ENCODE measurements at regions of chr6 and their contacts with region 1.

Region 1: GRCh38 chr6:42050266-42051032 is at the start of gene TAF8:
- DNase-seq: peak; percentile 81
- ATAC-seq: peak; percentile 74
- H3K4me3 Mint-ChIP-seq: peak within 1 kb of the TSS; percentile 96
- H3K27ac Mint-ChIP-seq: peak within 1 kb of the TSS; percentile 99
- H3K4me1 Mint-ChIP-seq: peaks cover 54% of the 10 kb centered on the region
- H3K27me3 Mint-ChIP-seq: no peaks in the 10 kb centered on the region
- CTCF ChIP-seq: no peak
- total RNA-seq, gene TAF8: 47.2 and 55.7 TPM in 2 replicates

Region 2: GRCh38 chr6:41072676-41073623 is 977.5 kb before region 1 on chr6 and contains the start of gene NFYA:
- CTCF ChIA-PET with region 1: no interaction called
- POLR2A ChIA-PET with region 1: interaction called, 5 read pairs
- intact Hi-C with region 1: loop called (anchors 2 kb)
- DNase-seq: peak; percentile 100
- ATAC-seq: peak; percentile 63
- H3K4me3 Mint-ChIP-seq: peak within 1 kb of the TSS; percentile 96
- H3K27ac Mint-ChIP-seq: peak within 1 kb of the TSS; percentile 98
- H3K4me1 Mint-ChIP-seq: peaks cover 47% of the 10 kb centered on the region
- H3K27me3 Mint-ChIP-seq: no peaks in the 10 kb centered on the region
- CTCF ChIP-seq: no peak
- total RNA-seq, gene NFYA: 33.7 and 35.1 TPM in 2 replicates

Region 3: GRCh38 chr6:41683510-41684310 is 366.7 kb before region 1 on chr6:
- CTCF ChIA-PET with region 1: no interaction called
- POLR2A ChIA-PET with region 1: no interaction called
- intact Hi-C with region 1: no loop called
- DNase-seq: peak; percentile 78
- ATAC-seq: peak; percentile 82
- H3K4me3 Mint-ChIP-seq: peak overlapping the region; percentile 78
- H3K27ac Mint-ChIP-seq: peak overlapping the region; percentile 83
- H3K4me1 Mint-ChIP-seq: peaks cover 20% of the 10 kb centered on the region
- H3K27me3 Mint-ChIP-seq: no peaks in the 10 kb centered on the region
- CTCF ChIP-seq: peak; percentile 54

Region 4: GRCh38 chr6:41920921-41921711 is 129.3 kb before region 1 on chr6 and contains the starts of genes BYSL and MED20:
- CTCF ChIA-PET with region 1: interaction called, 43 read pairs
- POLR2A ChIA-PET with region 1: interaction called, 30 read pairs
- intact Hi-C with region 1: loop called (anchors 1 kb)
- DNase-seq: peak; percentile 95
- ATAC-seq: peak; percentile 91
- H3K4me3 Mint-ChIP-seq: peak within 1 kb of the TSS; percentile 98
- H3K27ac Mint-ChIP-seq: peak within 1 kb of the TSS; percentile 98
- H3K4me1 Mint-ChIP-seq: peaks cover 49% of the 10 kb centered on the region
- H3K27me3 Mint-ChIP-seq: no peaks in the 10 kb centered on the region
- CTCF ChIP-seq: peak; percentile 24
- total RNA-seq, gene BYSL: 39.5 and 43.2 TPM in 2 replicates
- total RNA-seq, gene MED20: 21.1 and 22.2 TPM in 2 replicates

Region 5: DNA sequence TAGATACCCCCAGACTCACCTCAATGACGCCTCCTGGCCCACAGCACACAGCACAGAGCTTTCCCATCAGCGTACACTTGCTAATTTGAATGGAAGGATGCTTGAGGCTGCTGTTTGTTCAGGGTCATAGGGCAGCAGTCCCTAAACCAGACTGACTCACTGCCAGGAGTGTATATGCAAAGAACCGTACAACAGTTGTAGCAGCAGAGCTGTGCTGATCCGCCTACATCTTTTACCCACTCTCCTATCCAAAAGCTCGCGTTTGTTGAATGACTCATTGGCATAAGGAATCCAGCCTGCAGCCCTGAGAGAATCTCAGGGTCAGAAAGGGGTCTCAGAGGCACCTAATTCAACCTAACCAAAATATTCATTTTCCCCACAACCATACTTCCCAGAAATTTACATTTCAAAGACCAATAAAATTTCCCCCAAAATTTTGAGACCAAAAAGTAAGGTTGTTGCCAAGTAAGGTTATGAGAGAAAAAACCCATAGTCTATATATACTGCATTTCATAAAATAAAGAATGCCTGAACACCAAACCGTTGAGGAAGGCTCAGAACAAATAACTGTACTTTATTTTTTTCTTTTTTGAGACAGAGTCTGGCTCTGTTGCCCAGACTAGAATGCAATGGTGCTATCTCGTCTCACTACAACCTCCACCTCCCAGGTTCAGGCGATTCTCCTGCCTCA is 73.5 kb before region 1 on chr6:
- CTCF ChIA-PET with region 1: no interaction called
- POLR2A ChIA-PET with region 1: interaction called, 10 read pairs
- intact Hi-C with region 1: no loop called
- DNase-seq: no peak
- ATAC-seq: peak; percentile 76
- H3K4me3 Mint-ChIP-seq: peak overlapping the region; percentile 47
- H3K27ac Mint-ChIP-seq: peak overlapping the region; percentile 85
- H3K4me1 Mint-ChIP-seq: peaks cover 72% of the 10 kb centered on the region
- H3K27me3 Mint-ChIP-seq: no peaks in the 10 kb centered on the region
- CTCF ChIP-seq: no peak

Region 6: DNA sequence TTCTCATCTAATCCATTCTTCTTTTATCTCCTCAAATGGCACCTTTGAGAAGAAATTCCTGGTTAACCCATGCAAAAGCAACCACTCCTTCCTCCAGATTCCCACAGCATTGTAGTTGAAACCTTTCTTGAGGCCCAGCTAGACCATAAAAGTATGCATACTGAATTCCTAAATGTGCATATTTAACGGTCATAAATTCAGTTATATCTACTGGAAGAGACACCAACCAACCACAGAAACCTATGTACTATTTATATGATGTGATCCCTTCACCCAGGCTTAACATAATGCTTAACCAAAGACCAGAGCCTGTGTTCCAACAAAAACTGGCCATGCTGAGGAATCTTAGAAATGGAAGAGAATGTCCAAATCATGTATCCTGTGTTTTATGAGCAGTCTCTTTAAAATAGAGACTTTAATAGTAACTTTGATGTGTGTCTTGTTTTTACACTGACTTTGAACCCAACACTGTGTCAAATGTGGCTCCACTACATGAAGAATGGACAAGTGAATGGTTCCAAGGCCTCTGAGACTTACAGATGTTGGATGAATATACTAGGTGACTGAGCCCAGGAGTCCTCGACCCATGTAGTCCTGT is 11.5 kb before region 1 on chr6:
- CTCF ChIA-PET with region 1: no interaction called
- POLR2A ChIA-PET with region 1: interaction called, 19 read pairs
- intact Hi-C with region 1: no loop called
- DNase-seq: no peak
- ATAC-seq: no peak
- H3K4me3 Mint-ChIP-seq: peak overlapping the region; percentile 70
- H3K27ac Mint-ChIP-seq: peak overlapping the region; percentile 92
- H3K4me1 Mint-ChIP-seq: peaks cover 59% of the 10 kb centered on the region
- H3K27me3 Mint-ChIP-seq: no peaks in the 10 kb centered on the region
- CTCF ChIP-seq: no peak

Region 7: DNA sequence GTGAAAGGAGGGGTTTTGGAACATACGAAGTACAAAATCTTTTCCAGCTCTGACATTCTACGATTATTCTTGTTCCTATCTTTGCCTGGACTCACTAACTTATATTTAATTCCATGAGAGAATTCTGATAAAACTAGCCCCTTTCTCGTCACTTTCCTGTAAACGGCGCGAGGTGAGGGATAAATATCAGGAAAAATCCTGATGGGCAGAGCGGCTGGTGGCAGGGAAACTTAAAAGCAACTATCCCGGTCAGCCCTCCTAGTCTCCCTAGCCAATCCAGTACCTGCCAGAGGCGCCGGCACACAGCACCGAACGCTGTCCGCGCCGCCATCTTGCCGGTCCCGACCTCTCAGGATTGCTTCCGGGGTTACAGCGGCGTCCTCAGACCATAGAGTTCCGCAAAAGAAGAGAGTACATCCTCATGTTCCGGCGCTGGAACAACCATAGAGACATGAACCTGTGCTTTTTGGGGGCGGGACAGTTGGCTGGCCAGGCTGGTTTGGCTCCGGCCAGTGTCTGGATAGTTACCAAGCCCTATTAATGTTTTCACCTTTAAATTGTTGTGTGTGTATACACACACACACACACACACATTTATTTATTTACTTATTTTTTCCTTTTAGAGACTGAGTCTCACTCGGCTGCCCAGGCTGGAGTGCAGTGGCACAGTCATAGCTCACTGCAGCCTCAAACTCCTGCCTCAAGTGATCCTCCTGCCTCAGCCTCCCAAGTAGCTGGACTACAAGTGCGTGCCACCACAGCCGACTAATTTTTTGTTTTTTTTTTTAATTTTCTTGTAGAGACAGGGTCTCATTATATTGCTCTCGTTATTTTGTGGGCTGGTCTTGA is 167.3 kb after region 1 on chr6 and contains the start of gene MRPS10:
- CTCF ChIA-PET with region 1: interaction called, 3 read pairs
- POLR2A ChIA-PET with region 1: interaction called, 11 read pairs
- intact Hi-C with region 1: loop called (anchors 5 kb)
- DNase-seq: peak; percentile 76
- ATAC-seq: peak; percentile 99
- H3K4me3 Mint-ChIP-seq: peak within 1 kb of the TSS; percentile 99
- H3K27ac Mint-ChIP-seq: peak within 1 kb of the TSS; percentile 95
- H3K4me1 Mint-ChIP-seq: peaks cover 30% of the 10 kb centered on the region
- H3K27me3 Mint-ChIP-seq: no peaks in the 10 kb centered on the region
- CTCF ChIP-seq: no peak
- total RNA-seq, gene MRPS10: 35.7 and 37.0 TPM in 2 replicates